ENCODE measurements at regions of chr1 and their contacts with region 1.

Region 1: GRCh38 chr1:21939650-21940374 is 2.7 kb upstream of the HSPG2 start:
- DNase-seq: no peak
- ATAC-seq: no peak
- H3K4me3 ChIP-seq: no peak overlapping the region
- H3K4me3 Mint-ChIP-seq: no peak overlapping the region
- H3K27ac ChIP-seq: no peak overlapping the region
- H3K27ac Mint-ChIP-seq: no peak overlapping the region
- H3K4me1 ChIP-seq: peaks cover 13% of the 10 kb centered on the region
- H3K4me1 Mint-ChIP-seq: peaks cover 7 to 13% of the 10 kb centered on the region in 2 donors
- H3K27me3 ChIP-seq: peaks cover 9% of the 10 kb centered on the region
- H3K27me3 Mint-ChIP-seq: peaks cover 0 to 17% of the 10 kb centered on the region in 2 donors
- CTCF ChIP-seq: no peak

Region 2: DNA sequence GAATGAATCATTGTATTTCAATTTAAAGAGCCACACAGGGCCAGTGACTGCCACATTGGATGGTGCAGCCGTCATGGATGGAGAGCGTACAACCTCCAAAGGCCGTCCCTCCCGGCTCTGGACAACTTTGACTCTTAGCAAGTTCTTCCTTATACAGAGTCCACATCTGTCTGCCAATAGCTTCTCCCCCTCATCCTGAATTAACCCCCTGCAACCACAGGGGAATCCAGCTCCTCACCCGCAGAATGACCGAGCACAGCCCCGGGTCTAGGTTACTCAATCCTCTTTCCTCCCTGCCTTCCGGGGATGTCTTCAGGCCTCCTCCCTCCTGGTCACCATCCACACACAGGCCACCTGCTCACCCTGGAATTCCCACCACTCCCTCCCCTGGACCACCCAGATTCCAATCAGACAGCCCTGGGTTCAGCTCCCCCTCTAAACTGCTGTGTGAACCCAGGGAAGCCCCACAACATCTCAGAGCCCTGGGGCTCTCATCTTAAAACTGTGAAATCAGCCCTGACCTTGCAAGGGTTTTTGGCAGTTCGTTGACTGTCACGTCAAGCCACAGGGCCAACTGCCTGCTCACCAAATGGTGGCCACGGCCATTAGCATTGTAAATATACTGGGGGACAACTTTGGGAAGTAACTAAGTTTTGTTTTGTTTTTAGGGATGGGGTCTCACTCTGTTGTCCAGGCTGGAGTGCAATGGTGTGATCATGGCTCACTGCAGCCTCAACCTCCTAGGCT is 57.0 kb before region 1 on chr1:
- intact Hi-C with region 1: loop called (anchors 10 kb)
- DNase-seq: no peak
- ATAC-seq: no peak
- H3K4me3 ChIP-seq: no peak overlapping the region
- H3K4me3 Mint-ChIP-seq: no peak overlapping the region
- H3K27ac ChIP-seq: no peak overlapping the region
- H3K27ac Mint-ChIP-seq: no peak overlapping the region
- H3K4me1 ChIP-seq: no peaks in the 10 kb centered on the region
- H3K4me1 Mint-ChIP-seq: peaks cover 0 to 6% of the 10 kb centered on the region in 2 donors
- H3K27me3 ChIP-seq: no peaks in the 10 kb centered on the region
- H3K27me3 Mint-ChIP-seq: no peaks in the 10 kb centered on the region
- CTCF ChIP-seq: no peak

Measured in natural killer cell (primary cell).